HCT116 (cell line): ENCODE measurements at regions of chr16 and their contacts with region 1.

Region 1: DNA sequence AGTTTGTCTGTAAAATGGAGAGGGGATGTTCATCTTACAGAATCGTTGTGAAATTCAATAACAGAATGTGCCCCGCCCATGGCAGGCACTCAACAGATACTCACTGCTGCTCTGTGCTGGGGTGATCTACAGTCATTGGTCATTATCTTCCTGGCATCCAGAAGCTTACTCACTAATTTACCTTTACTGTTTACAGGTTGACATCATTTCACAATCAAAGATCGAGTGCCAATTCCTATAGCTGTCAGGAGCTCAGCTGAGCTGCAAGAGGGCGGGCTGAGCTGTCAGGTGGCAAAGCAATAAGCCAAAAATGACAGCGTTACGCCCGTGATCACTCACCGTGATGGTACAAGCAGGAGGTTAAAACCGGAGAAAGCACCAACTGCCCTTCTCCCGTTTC is 51.2 kb downstream of the LITAF start:
- DNase-seq: no peak
- ATAC-seq: no peak
- H3K4me3 ChIP-seq: no peak overlapping the region
- H3K27ac ChIP-seq: no peak overlapping the region
- H3K4me1 ChIP-seq: peaks cover 4 to 5% of the 10 kb centered on the region in 2 experiments; a peak in 2 of 4 replicates
- H3K27me3 ChIP-seq: no peaks in the 10 kb centered on the region
- CTCF ChIP-seq: no peak
- POLR2A ChIP-seq: no peak
- RAD21 ChIP-seq: no peak

Region 2: GRCh38 chr16:11497851-11498289 is 37.6 kb before region 1 on chr16:
- CTCF ChIA-PET with region 1: interaction called, 13 read pairs
- POLR2A ChIA-PET with region 1: no interaction called
- RAD21 ChIA-PET with region 1: interaction called, 3 read pairs
- intact Hi-C with region 1: no loop called
- DNase-seq: peak; percentile 92
- ATAC-seq: peak; percentile 57
- H3K4me3 ChIP-seq: peak overlapping the region in 1 of 2 experiments; percentile 39; a peak in 1 of 4 replicates
- H3K27ac ChIP-seq: peak overlapping the region; percentile 87
- H3K4me1 ChIP-seq: peaks cover 46 to 68% of the 10 kb centered on the region in 2 experiments
- H3K27me3 ChIP-seq: no peaks in the 10 kb centered on the region
- CTCF ChIP-seq: no peak
- POLR2A ChIP-seq: peak; percentile 34
- RAD21 ChIP-seq: no peak

Region 3: DNA sequence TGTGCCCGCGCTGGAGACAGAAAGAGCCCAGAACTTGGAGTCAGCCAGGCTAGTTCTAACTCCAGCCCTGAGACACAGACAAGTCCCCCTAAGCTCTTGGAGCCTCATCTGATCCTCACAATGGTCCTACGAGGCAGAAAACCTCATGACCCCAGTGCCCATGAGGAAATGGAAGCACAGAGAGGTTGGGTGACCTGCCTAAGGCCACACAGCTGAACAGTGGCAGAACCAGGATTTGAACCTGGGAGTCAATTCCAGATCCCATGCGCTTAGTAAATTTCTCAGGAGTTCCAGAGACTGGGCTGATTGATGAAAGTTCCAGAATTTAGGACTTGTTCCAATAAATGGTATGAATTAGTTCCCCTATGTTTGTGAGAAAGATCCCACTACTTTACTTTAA is 90.3 kb after region 1 on chr16:
- CTCF ChIA-PET with region 1: no interaction called
- POLR2A ChIA-PET with region 1: no interaction called
- RAD21 ChIA-PET with region 1: no interaction called
- intact Hi-C with region 1: no loop called
- DNase-seq: no peak
- ATAC-seq: no peak
- H3K4me3 ChIP-seq: no peak overlapping the region
- H3K27ac ChIP-seq: no peak overlapping the region
- H3K4me1 ChIP-seq: peaks cover 16 to 39% of the 10 kb centered on the region in 2 experiments
- H3K27me3 ChIP-seq: no peaks in the 10 kb centered on the region
- CTCF ChIP-seq: no peak
- POLR2A ChIP-seq: no peak
- RAD21 ChIP-seq: no peak

Region 4: GRCh38 chr16:11639925-11640899 is 104.7 kb after region 1 on chr16:
- CTCF ChIA-PET with region 1: interaction called, 14 read pairs
- POLR2A ChIA-PET with region 1: interaction called, 4 read pairs
- RAD21 ChIA-PET with region 1: interaction called, 4 to 5 read pairs
- intact Hi-C with region 1: loop called (anchors 1 kb)
- DNase-seq: peak; percentile 63
- ATAC-seq: peak; percentile 57
- H3K4me3 ChIP-seq: no peak overlapping the region
- H3K27ac ChIP-seq: peak overlapping the region; percentile 58
- H3K4me1 ChIP-seq: peaks cover 20 to 31% of the 10 kb centered on the region in 2 experiments
- H3K27me3 ChIP-seq: no peaks in the 10 kb centered on the region
- CTCF ChIP-seq: no peak
- POLR2A ChIP-seq: no peak
- RAD21 ChIP-seq: peak; percentile 24; the same call in 1 of the 2 replicates

Region 5: DNA sequence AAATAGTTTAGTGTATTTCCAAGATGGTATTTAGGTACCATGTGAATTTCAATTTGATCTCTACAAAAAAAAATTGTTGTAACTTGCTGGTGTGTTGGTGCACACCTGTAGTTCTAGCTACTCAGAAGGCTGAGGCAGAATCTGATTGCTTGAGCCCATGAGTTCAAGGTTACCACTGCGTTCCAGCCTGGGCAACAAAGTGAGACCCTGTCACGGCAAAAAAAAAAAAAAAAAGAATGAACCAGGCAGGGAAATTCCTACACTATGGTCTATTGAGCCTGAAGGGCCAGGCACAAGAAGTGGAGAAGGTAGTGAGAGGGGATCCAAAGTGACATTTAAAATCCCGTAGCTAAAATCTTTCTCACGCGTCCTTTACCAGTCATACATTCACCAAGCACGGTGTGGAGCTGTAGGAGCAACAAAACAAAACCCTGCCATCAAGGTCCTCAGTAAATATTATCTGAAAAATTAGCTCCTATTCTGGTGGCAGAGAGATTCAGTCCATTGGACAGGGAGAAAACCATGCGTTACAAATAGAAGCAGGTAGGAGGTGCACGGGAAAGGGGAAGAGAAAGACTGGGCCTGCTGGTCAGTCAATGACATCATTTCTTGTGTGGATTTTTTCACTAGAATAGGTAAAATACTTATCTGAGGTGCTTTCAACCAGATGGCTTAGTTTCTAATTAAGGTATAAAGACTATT is 179.9 kb after region 1 on chr16:
- CTCF ChIA-PET with region 1: interaction called, 8 read pairs
- POLR2A ChIA-PET with region 1: no interaction called
- RAD21 ChIA-PET with region 1: no interaction called
- intact Hi-C with region 1: loop called (anchors 1 kb)
- DNase-seq: no peak
- ATAC-seq: no peak
- H3K4me3 ChIP-seq: no peak overlapping the region
- H3K27ac ChIP-seq: no peak overlapping the region
- H3K4me1 ChIP-seq: no peaks in the 10 kb centered on the region
- H3K27me3 ChIP-seq: no peaks in the 10 kb centered on the region
- CTCF ChIP-seq: no peak
- POLR2A ChIP-seq: no peak
- RAD21 ChIP-seq: no peak

Region 6: GRCh38 chr16:11816103-11816502 is 280.6 kb after region 1 on chr16:
- CTCF ChIA-PET with region 1: interaction called, 6 read pairs
- POLR2A ChIA-PET with region 1: no interaction called
- RAD21 ChIA-PET with region 1: no interaction called
- intact Hi-C with region 1: loop called (anchors 1 kb)
- DNase-seq: no peak
- ATAC-seq: no peak
- H3K4me3 ChIP-seq: no peak overlapping the region
- H3K27ac ChIP-seq: no peak overlapping the region
- H3K4me1 ChIP-seq: peaks cover 2 to 4% of the 10 kb centered on the region in 2 experiments; a peak in 1 of 4 replicates
- H3K27me3 ChIP-seq: no peaks in the 10 kb centered on the region
- CTCF ChIP-seq: no peak
- POLR2A ChIP-seq: no peak
- RAD21 ChIP-seq: no peak